Heart left ventricle (tissue), 16 donors: ENCODE measurements at regions of chr19 and their contacts with region 1.

Region 1: DNA sequence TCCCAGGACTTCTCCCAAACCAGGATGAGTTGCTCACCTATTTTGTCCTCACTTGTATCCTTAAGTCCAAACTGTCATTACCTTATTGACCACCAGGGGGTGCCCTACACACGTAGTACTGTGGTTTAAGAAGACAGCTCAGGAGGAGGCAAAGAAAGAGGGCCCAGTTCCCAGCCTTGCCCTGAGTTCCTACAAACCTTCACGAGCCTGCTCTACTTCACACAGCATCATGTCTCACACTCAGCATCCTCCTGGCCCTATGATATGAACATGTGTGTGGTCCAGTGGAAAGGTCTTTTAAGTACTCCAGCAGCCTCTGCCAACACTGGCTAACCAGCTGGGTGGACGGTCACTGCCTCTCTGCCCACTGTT is 8.1 kb upstream of the ZNF784 start:
- DNase-seq: peak; percentile 42 to 86 (median 83)
- ATAC-seq: peak; percentile 16 to 62 (median 58)
- H3K4me3 ChIP-seq: no peak overlapping the region
- H3K27ac ChIP-seq: peak overlapping the region in 1 of 12 donors; percentile 67
- H3K4me1 ChIP-seq: peaks cover 6 to 40% (median 22%) of the 10 kb centered on the region in 12 donors
- H3K27me3 ChIP-seq: no peaks in the 10 kb centered on the region
- CTCF ChIP-seq: peak; percentile 78 to 97 (median 86)
- POLR2A ChIP-seq: no peak

Region 2: DNA sequence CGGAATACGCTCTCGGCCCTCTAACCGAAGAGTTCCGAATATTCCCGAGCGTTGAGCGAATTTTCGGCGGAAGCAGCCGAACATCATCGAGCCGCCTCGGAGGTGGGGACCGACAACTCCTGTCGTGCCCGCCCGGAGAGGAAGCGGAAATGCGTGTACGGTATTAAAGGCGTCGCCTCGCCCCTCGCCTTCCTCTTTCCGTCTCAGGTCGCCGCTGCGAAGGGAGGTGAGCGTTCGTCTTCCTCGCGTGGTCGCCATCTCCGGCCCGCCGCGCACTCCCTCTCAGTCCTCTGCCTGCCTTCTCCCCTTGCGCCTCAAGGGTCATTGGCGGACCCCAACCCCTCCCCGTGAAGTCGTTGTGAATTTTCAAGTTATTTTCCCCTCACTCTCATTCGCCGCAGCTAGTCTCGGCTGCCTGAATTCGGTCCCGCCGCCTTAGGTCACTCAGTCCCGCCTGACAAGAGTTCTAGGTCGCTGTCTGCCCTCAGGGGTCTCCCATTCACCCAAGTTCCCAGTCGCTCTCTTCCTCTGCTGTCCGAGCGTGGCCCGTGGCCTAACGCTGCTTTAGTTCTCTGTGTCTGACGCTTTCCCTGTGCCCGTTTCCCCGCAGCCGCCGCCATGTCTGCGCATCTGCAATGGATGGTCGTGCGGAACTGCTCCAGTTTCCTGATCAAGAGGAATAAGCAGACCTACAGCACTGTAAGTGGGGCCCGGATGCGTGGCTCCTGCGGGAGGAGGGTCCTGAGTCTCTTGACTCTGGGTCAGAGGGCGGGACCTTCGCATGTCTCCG is 246.5 kb before region 1 on chr19 and contains the start of gene RPL28:
- intact Hi-C with region 1: loop called in 1 of 10 experiments (anchors 10 kb)
- DNase-seq: peak; percentile 98 to 99 (median 98)
- ATAC-seq: peak; percentile 90 to 95 (median 90)
- H3K4me3 ChIP-seq: peak within 1 kb of the TSS; percentile 48 to 87 (median 78)
- H3K27ac ChIP-seq: peak within 1 kb of the TSS; percentile 79 to 97 (median 94)
- H3K4me1 ChIP-seq: peaks cover 14 to 58% (median 42%) of the 10 kb centered on the region in 12 donors
- H3K27me3 ChIP-seq: no peaks in the 10 kb centered on the region
- CTCF ChIP-seq: no peak
- POLR2A ChIP-seq: peak; percentile 34 to 99
- total RNA-seq, gene RPL28: 196 to 1,019 (median 565) TPM

Region 3: DNA sequence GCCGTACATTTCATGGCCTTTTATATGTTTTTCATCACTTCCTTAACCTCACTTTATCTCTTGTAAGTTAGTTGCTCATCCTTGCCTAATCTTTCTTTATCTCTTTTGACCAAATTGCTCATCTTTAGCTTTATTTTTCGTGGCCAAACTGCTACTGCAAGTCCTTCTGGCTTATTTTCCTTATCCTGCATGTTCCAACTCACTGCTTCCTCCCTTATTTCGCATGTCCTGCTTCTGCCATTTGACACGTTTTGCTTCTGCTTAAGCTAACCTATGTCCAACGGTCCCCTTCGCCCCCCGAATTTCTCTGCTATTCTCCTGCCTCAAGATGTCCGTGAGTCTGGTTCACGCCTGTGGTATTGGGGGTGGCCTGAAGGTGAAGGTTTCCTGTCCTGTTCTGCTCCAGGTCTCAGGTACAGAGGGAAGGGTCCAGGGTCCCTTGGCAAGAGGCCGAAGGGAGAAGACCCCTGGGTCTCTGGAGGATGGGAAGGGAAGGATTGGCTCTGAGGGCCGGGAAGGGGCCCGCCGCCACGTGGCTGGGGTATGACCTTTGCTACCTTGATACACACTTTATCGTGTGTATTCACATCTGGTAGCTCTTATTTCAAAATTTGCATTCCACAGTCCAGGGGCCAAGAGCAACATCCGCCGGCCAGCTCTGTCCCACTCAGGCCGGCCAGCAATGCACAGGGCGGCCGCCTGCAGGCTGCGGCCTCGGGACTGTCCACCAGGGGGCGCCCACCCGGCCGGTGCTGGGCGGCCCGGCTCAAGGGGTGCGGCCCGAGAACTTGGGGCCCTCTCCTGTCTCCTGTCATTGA is 165.0 kb before region 1 on chr19:
- intact Hi-C with region 1: loop called in 6 of 10 experiments (anchors 2 to 5 kb)
- DNase-seq: peak; percentile 62 to 88 (median 74)
- ATAC-seq: peak; percentile 74 to 89 (median 88)
- H3K4me3 ChIP-seq: no peak overlapping the region
- H3K27ac ChIP-seq: no peak overlapping the region
- H3K4me1 ChIP-seq: peaks cover 0 to 12% (median 7%) of the 10 kb centered on the region in 12 donors
- H3K27me3 ChIP-seq: no peaks in the 10 kb centered on the region
- CTCF ChIP-seq: peak; percentile 96 to 100 (median 99)
- POLR2A ChIP-seq: no peak

Region 4: DNA sequence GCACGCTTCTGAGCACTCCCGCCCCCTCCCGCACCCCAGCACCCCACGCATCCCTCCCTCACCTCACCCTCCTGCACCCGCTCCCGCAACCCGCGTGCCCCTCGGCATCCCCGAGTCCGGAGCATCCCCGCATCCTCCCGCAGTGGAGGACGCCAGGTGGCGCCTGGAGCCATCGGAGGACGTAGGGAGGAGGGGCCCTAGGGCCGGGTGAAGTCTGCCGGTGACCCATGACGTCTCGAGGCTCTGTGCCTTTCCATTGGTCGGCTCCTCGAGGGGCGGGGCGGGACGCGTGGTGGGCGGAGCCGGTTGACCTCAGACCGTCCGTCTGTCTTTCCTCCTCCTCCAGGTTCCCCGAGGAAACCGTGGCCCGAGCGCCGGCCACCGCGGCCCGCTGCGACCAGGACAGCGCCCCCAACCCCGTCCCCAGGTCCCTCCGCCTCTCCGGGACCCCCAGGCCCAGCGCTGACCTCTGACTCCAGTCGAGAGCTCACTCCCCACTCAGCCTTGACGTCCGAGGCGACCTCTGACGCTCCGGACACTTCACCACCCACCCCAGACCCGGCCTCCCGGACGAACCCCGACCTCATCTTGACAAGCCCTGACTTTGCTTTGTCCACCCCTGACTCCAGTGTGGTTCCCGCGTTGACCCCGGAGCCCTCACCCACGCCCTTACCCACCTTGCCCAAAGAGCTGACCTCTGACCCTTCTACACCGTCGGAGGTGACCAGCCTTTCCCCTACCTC is 115.4 kb before region 1 on chr19:
- intact Hi-C with region 1: loop called in 9 of 10 experiments (anchors 1 to 5 kb)
- DNase-seq: peak; percentile 92 to 97 (median 94)
- ATAC-seq: peak; percentile 99 to 100 (median 99)
- H3K4me3 ChIP-seq: peak overlapping the region; percentile 14 to 68 (median 58)
- H3K27ac ChIP-seq: peak overlapping the region; percentile 86 to 99 (median 94)
- H3K4me1 ChIP-seq: peaks cover 0 to 21% (median 5%) of the 10 kb centered on the region in 12 donors
- H3K27me3 ChIP-seq: no peaks in the 10 kb centered on the region
- CTCF ChIP-seq: peak; percentile 69 to 93 (median 84)
- POLR2A ChIP-seq: peak in 1 of 2 donors; percentile 77

Region 5: GRCh38 chr19:55599468-55600279 is 32.8 kb before region 1 on chr19 and contains the start of gene FIZ1:
- intact Hi-C with region 1: loop called in 2 of 10 experiments (anchors 2 to 5 kb)
- DNase-seq: peak; percentile 98 to 99 (median 99)
- ATAC-seq: peak; percentile 87 to 96 (median 94)
- H3K4me3 ChIP-seq: peak within 1 kb of the TSS; percentile 62 to 99 (median 86)
- H3K27ac ChIP-seq: peak within 1 kb of the TSS; percentile 92 to 100 (median 99)
- H3K4me1 ChIP-seq: peaks cover 1 to 28% (median 14%) of the 10 kb centered on the region in 12 donors
- H3K27me3 ChIP-seq: no peaks in the 10 kb centered on the region
- CTCF ChIP-seq: no peak
- POLR2A ChIP-seq: no peak
- total RNA-seq, gene FIZ1: 11.2 to 15.4 (median 12.9) TPM

Region 6: DNA sequence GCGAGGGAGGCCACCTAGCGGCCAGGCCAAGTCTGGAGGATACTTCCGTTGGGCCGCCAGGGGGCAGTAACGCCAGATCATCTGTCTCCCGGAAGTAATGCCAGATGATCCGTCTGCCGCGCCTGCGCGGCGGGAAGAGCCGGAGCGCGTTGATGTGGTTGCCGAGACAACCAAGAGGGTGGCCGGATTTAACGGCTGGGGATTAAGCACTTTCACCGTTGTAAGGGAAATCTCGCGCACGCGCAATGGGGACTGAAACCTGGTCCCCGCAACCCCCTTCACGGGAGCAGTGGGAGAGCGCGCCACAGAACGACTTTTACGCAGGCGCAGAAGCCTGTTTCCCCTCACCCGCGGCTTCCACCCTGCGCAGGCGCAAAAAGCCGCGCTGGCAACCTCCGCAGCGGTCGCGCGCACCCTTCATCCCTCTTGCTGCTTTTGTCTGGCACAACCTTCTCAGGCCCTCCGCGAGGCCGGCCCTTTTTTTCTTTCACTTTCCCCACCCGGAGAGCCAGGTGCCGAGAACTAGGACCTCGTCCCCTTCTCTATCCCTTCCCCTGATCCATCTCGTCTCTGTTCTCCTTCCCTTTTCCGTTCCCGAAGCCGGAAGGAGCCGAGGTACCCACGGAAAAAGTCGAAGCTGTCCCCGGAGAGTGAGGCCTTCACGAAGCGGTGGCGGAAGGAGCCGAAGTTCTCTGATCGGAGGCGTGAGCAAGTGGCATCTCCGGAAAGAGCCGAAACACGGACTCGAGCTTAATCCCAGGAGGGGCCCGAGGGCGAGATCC is 21.5 kb after region 1 on chr19:
- intact Hi-C with region 1: loop called in 2 of 10 experiments (anchors 2 kb)
- DNase-seq: peak; percentile 99 to 100 (median 99)
- ATAC-seq: peak; percentile 72 to 84 (median 79)
- H3K4me3 ChIP-seq: peak overlapping the region; percentile 50 to 99 (median 93)
- H3K27ac ChIP-seq: peak overlapping the region; percentile 94 to 100 (median 99)
- H3K4me1 ChIP-seq: peaks cover 12 to 48% (median 42%) of the 10 kb centered on the region in 12 donors
- H3K27me3 ChIP-seq: no peaks in the 10 kb centered on the region
- CTCF ChIP-seq: peak; percentile 97 to 100 (median 99)
- POLR2A ChIP-seq: peak in 1 of 2 donors; percentile 71

Region 7: DNA sequence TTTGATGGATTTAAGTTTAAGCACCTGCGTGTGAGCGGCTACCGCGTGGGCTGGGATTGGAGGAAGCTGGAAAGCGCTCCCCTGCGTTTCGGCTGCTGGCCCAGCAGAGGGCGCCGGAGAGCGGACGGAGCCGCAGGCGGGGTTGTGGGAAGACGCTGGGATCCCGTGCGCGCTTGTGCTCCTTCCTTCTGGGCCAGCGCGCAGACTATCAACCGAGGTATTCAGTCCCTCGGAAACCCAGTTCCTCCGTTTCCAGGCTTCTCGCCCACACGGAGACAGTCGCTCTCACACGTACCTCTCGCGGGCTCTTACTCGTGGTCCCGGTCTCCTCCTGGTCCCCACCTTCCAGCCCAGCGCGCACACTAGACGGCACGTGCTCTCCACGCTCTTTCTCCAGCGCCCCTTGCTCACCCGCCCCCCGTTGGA is 71.4 kb after region 1 on chr19:
- intact Hi-C with region 1: no loop called
- DNase-seq: peak in 2 of 5 donors; percentile 26 to 77
- ATAC-seq: peak in 3 of 4 donors; percentile 57 to 65 (median 65)
- H3K4me3 ChIP-seq: no peak overlapping the region
- H3K27ac ChIP-seq: no peak overlapping the region
- H3K4me1 ChIP-seq: peaks cover 0 to 5% (median 0%) of the 10 kb centered on the region in 12 donors
- H3K27me3 ChIP-seq: no peaks in the 10 kb centered on the region
- CTCF ChIP-seq: peak; percentile 62 to 89 (median 74)
- POLR2A ChIP-seq: no peak